Prostate gland (tissue), 2 donors: ENCODE measurements at regions of chr20 and their contacts with region 1.

Region 1: DNA sequence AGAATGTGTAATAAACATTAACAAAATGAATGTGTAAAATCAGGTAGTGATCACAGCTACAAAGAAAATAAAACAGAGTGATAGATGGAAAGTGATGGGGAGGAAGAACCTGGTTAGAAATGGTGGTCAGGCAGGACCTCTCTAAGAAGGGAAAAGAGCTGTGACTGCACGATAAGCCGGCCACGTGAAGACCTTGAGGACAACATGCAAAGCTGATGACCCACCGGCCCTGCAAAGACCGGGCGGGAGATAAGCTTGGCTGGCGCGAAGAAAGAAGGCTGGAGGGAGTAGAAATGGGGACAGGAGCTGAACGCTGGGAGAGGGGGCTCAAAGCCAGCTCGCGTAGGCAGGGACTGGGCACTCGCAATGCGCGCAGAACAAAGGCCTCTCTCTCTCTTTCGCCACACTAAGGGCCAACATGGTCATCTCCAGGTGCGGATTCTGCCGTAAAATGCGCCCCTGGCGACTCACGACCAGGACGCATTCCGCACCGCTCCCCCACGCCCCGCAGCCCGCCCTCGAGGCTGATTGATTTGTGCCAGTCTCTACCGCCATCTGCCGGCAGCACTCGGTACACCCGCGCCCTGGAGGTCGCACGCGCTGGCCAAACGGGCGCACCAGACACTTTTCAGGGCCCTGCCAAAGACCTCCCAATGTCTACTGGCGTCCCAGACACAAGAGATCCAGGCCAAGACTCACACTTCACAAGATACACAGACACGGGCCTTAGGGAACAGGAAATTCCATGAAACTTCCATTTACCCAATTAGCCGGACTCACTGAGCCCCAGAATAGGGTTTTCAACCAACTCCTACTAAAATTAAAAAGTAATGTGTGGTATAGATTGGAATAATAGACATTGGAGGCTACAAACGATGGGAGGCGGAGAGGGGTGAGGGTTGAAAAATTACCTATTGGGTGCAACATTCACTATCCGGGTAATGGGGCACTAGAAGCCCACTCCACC is 9.4 kb downstream of the DEFB132 start:
- DNase-seq: peak; percentile 75
- H3K4me3 ChIP-seq: peak overlapping the region; percentile 22 to 31
- H3K27ac ChIP-seq: peak overlapping the region in 1 of 2 donors; percentile 2
- H3K4me1 ChIP-seq: no peaks in the 10 kb centered on the region
- H3K27me3 ChIP-seq: no peaks in the 10 kb centered on the region
- CTCF ChIP-seq: peak; percentile 89 to 97 (median 94)
- POLR2A ChIP-seq: no peak

Region 2: DNA sequence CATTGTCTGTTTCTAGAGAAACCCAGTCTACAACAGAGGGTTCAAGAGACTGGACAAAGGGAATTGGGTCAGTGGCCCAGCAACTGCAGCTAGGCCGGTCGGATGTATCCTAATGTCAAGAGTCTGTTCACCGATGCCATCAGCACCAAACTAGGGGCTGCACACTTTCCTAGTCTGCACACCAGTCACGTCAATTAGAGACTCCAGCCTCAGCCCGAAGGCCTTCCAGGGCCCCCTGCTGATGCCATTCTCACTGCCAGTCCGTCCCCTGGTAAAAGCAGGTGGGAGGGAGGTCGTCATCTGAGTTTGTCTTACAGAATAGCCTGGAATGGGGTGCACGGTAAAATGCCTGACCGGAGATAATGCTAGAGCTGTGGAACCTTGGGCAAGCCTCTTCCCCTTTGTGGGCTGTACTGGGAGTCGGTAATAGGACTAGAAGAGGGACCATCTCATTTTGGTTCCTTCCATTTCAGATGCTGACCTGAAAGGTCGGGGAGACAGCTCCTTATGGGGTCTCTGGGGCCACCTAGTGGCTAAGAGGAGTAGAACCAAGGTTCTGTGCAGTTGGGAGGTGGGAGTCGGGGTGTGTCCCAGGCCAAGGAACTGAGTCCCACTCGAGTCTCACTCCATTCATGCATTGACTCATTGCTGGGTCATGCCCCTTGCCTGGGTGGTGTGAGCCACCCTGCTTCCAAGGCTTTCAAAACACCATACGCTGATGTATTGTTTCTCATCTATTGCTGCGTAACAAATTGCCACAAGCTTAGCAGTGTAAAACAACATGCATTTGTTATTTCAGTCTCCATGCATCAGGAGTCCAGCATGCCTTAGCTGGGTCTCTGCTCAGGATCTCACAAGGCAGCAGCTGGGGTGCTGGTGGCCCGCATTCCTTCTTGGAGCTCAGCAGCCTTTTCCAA is 63.6 kb after region 1 on chr20:
- intact Hi-C with region 1: loop called (anchors 2 kb)
- DNase-seq: peak; percentile 22
- H3K4me3 ChIP-seq: no peak overlapping the region
- H3K27ac ChIP-seq: no peak overlapping the region
- H3K4me1 ChIP-seq: no peaks in the 10 kb centered on the region
- H3K27me3 ChIP-seq: no peaks in the 10 kb centered on the region
- CTCF ChIP-seq: peak; percentile 47 to 80 (median 66)
- POLR2A ChIP-seq: peak; percentile 4